CD8-positive, alpha-beta memory T cell (primary cell): ENCODE measurements at regions of chr10 and their contacts with region 1.

Region 1: DNA sequence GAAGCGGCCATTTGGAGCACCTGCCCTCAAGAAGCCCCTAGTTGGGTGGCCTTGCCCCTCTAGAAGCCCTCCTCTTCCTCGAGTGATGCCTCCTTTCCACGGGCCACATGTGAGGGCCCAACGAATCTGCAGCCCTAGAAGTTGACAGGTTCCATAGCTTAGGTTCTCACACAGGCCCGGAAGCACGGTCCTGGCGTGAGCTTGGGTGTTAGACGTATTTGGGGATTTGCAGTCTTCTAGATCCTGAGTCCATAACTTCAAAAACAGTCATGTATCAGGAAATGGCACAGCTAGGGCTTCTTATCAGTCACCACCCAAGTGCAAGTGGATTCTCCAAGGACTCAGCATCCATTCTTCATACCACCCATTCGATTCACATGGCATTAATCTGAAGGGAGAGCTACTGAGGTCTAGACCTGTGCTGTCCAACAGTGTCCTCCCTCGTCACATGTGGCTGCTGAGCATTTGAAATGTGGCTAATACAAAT is 477 bp upstream of the FBXW4 start:
- DNase-seq: no peak
- H3K4me3 ChIP-seq: peak overlapping the region; percentile 38
- H3K4me3 Mint-ChIP-seq: peak overlapping the region; percentile 80 to 91 (median 85)
- H3K27ac ChIP-seq: peak overlapping the region; percentile 95
- H3K27ac Mint-ChIP-seq: peak overlapping the region; percentile 91 to 97 (median 94)
- H3K4me1 ChIP-seq: peaks cover 39% of the 10 kb centered on the region
- H3K4me1 Mint-ChIP-seq: peaks cover 33 to 48% (median 35%) of the 10 kb centered on the region in 3 donors
- H3K27me3 ChIP-seq: no peaks in the 10 kb centered on the region
- H3K27me3 Mint-ChIP-seq: peaks cover 0 to under 1% of the 10 kb centered on the region in 2 donors

Region 2: GRCh38 chr10:101725296-101726115 is 30.1 kb after region 1 on chr10:
- CTCF ChIA-PET with region 1: no interaction called
- POLR2A ChIA-PET with region 1: interaction called, 11 read pairs
- DNase-seq: no peak
- H3K4me3 ChIP-seq: no peak overlapping the region
- H3K4me3 Mint-ChIP-seq: no peak overlapping the region
- H3K27ac ChIP-seq: no peak overlapping the region
- H3K27ac Mint-ChIP-seq: no peak overlapping the region
- H3K4me1 ChIP-seq: no peaks in the 10 kb centered on the region
- H3K4me1 Mint-ChIP-seq: no peaks in the 10 kb centered on the region
- H3K27me3 ChIP-seq: no peaks in the 10 kb centered on the region
- H3K27me3 Mint-ChIP-seq: peaks cover 3 to 30% of the 10 kb centered on the region in 2 donors